Posterior vena cava (tissue), 2 donors: ENCODE measurements at regions of chr17 and their contacts with region 1.

Region 1: GRCh38 chr17:82077617-82078358 is 12.2 kb upstream of the DUS1L start:
- DNase-seq: no peak

Region 2: DNA sequence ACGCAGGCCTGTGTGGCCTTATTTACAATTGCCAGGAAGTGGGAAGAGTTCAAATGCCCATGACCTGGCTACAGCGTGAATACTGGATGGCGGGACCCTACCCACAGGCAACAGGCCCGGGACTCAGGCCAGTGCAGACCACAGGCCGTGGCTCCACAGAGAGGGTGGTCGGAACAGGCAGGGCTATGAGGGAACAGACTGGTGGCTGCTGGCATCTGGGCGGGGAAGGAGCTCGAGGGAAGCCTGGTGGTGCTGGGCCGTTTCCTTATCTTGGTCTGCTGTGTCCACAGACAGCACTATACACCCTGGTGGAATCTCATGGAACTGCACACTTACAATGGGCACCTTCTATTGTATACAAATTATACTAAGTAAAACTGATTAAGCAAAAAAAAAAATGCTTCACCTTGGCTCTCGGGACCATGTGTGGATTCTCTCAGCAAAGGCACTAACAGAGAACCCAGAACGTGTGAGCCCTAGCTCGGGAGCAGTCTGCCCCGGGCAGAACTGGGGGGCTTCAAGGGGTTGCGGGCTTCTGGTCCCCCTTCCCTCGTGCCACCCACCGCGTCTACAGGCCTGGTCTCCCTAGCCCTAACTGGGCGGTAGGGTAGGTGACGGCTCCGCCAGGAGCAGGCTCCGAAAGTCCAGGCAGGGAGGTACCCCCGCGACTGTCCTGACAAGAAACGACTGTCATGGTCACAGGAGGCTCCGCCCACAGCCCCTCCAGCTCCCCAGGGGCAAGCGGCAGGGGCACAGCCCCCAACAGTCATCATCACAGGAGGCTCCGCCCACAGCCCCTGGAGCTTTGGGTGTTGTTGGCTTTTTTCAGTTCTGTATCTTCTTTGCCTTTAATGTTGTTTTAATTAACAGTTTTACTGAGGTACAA is 876.9 kb before region 1 on chr17:
- intact Hi-C with region 1: no loop called
- DNase-seq: no peak

Region 3: GRCh38 chr17:82030470-82031302 is 47.1 kb before region 1 on chr17:
- intact Hi-C with region 1: no loop called
- DNase-seq: peak; percentile 96

Region 4: DNA sequence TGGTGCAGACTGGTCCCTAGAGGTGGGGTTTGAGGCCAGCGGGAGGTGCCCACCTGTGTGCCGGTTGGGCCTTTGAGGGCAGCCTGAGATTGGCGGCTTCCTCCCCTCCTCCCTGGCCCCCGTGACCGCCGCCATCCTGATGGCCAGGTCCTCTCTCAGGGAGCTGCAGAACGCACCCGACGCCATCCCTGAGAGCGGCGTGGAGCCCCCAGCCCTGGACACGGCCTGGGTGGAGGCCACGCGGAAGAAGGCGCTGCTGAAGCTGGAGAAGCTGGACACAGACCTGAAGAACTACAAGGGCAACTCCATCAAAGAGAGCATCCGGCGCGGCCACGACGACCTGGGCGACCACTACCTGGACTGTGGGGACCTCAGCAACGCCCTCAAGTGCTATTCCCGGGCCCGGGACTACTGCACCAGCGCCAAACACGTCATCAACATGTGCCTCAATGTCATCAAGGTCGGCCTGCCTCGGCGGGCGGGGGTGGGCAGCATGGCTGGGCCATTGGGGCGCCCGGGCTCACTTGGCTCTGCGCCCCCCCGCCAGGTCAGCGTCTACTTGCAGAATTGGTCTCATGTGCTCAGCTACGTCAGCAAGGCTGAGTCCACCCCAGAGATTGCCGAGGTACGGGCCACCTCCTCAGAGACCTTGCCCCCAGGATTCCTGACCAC is 23.3 kb before region 1 on chr17:
- intact Hi-C with region 1: loop called in 1 of 2 experiments (anchors 1 kb)
- DNase-seq: no peak